H1 (cell line): ENCODE measurements at regions of chr15 and their contacts with region 1.

Region 1: DNA sequence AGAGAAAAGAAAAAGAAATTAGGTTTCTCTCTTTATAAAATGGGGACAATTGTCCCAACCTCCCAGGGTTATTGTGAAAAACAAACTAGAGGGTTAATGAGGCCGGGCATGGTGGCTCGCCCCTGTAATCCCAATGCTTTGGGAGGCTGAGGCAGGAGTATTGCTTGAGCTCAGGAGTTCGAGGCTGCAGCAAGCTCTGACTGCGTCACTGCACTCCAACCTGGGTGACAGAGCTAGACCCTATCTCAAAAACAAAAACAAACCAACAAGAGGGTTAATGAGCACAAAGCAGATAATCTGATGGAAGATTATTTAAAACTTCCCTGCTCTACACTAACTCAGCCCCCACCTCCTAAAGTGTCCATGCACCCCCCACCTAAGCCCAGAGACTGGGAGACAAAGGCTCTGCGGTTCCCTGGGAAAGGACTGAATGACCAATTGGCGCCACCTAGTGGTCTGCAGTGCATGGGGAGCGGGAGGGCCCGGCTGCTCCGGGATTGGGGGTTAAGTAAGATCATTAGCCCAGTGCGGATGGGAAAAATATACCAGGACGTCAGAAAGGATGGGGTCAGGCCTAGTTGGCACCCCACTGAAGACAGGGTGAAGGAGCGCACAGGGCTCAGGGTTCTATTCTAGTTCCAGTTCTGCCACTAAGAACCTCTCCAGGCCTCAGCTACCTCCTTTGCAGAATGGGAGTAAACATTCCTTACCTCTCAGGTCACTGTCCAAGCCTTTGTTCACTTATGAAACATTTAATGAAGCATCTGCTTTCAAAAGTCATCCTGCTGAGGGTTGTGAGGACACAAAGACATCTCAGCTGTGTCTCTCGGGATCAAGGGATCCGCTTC is 15.6 kb downstream of the PIF1 start:
- DNase-seq: peak in 1 of 2 experiments; percentile 97
- H3K4me3 ChIP-seq: peak overlapping the region in 3 of 4 experiments; percentile 26 to 53 (median 26); a peak in 7 of 8 replicates
- H3K27ac ChIP-seq: peak overlapping the region; percentile 95
- H3K4me1 ChIP-seq: peaks cover 28 to 56% (median 44%) of the 10 kb centered on the region in 4 experiments
- H3K27me3 ChIP-seq: no peaks in the 10 kb centered on the region
- CTCF ChIP-seq: peak; percentile 87 to 94 (median 93)
- EP300 ChIP-seq: no peak
- POLR2A ChIP-seq: no peak; a peak in 1 of 3 replicates
- RAD21 ChIP-seq: peak; percentile 87 to 95

Region 2: DNA sequence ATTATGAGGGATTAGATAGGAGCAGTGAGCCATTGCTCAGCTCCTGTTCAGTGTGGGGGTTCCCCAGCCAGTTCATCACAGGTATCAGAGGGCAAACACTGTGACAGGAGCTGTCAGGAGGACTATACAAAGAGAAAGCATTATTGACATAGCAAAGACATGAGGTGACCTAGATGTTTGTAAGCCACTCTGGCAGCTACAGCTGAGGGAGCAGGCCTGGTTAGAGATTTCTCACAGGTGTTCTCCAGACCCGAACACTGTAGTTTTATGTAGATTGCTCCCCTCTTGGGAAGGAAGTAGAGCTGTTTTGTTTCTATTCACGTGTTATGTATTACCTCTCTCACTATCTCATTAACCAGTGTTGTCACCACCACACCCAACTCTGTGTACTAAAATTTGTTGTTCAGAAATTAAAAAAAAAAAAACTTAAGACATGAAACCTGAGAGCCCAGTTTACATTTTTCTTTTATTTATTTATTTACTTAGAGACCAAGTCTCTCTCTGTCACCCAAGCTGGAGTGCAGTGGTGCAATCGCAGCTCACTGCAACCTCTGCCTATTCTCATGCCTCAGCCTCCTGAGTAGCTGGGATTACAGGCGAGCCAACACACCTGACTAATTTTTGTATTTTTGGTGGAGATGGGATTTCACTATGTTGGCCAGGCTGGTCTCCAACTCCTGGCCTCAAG is 158.2 kb before region 1 on chr15:
- CTCF ChIA-PET with region 1: no interaction called
- POLR2A ChIA-PET with region 1: no interaction called
- DNase-seq: peak in 1 of 2 experiments; percentile 10
- H3K4me3 ChIP-seq: no peak overlapping the region
- H3K27ac ChIP-seq: no peak overlapping the region
- H3K4me1 ChIP-seq: peaks cover 3 to 5% (median 3%) of the 10 kb centered on the region in 4 experiments; a peak in 4 of 7 replicates
- H3K27me3 ChIP-seq: no peaks in the 10 kb centered on the region
- CTCF ChIP-seq: no peak
- EP300 ChIP-seq: no peak
- POLR2A ChIP-seq: no peak
- RAD21 ChIP-seq: no peak

Region 3: GRCh38 chr15:64740311-64741170 is 69.3 kb before region 1 on chr15:
- CTCF ChIA-PET with region 1: interaction called, 883 read pairs
- POLR2A ChIA-PET with region 1: interaction called, 157 read pairs
- DNase-seq: no peak
- H3K4me3 ChIP-seq: no peak overlapping the region
- H3K27ac ChIP-seq: no peak overlapping the region
- H3K4me1 ChIP-seq: peaks cover 0 to 2% (median 0%) of the 10 kb centered on the region in 4 experiments; a peak in 2 of 7 replicates
- H3K27me3 ChIP-seq: no peaks in the 10 kb centered on the region
- CTCF ChIP-seq: no peak; a peak in 1 of 4 replicates
- EP300 ChIP-seq: no peak
- POLR2A ChIP-seq: no peak
- RAD21 ChIP-seq: peak in 1 of 2 experiments; percentile 31; a peak in 3 of 4 replicates

Region 4: GRCh38 chr15:64767203-64767602 is 42.7 kb before region 1 on chr15:
- CTCF ChIA-PET with region 1: interaction called, 883 read pairs
- POLR2A ChIA-PET with region 1: interaction called, 46 read pairs
- DNase-seq: no peak
- H3K4me3 ChIP-seq: no peak overlapping the region
- H3K27ac ChIP-seq: peak overlapping the region; percentile 20; the same call in 1 of the 2 replicates
- H3K4me1 ChIP-seq: peaks cover 8 to 33% (median 17%) of the 10 kb centered on the region in 4 experiments
- H3K27me3 ChIP-seq: no peaks in the 10 kb centered on the region
- CTCF ChIP-seq: no peak
- EP300 ChIP-seq: no peak
- POLR2A ChIP-seq: no peak
- RAD21 ChIP-seq: peak; percentile 5 to 18; a peak in 1 of 4 replicates

Region 5: GRCh38 chr15:64825431-64826294 is 15.8 kb after region 1 on chr15 and contains the start of gene PIF1:
- CTCF ChIA-PET with region 1: interaction called, 81 read pairs
- POLR2A ChIA-PET with region 1: interaction called, 381 read pairs
- DNase-seq: peak; percentile 85 to 87
- H3K4me3 ChIP-seq: peak within 1 kb of the TSS; percentile 85 to 93 (median 88)
- H3K27ac ChIP-seq: peak within 1 kb of the TSS; percentile 92
- H3K4me1 ChIP-seq: peaks cover 2 to 9% (median 5%) of the 10 kb centered on the region in 4 experiments; a peak in 6 of 7 replicates
- H3K27me3 ChIP-seq: no peaks in the 10 kb centered on the region
- CTCF ChIP-seq: no peak
- EP300 ChIP-seq: peak in 1 of 2 experiments; percentile 96; a peak in 1 of 3 replicates
- POLR2A ChIP-seq: peak; percentile 84 to 97
- RAD21 ChIP-seq: 0 out of 4 replicates have a peak, but pooled peaks of 1 of the 2 experiments have one; percentile 8
- total RNA-seq, gene PIF1: 136 and 138 TPM in 2 replicates

Region 6: DNA sequence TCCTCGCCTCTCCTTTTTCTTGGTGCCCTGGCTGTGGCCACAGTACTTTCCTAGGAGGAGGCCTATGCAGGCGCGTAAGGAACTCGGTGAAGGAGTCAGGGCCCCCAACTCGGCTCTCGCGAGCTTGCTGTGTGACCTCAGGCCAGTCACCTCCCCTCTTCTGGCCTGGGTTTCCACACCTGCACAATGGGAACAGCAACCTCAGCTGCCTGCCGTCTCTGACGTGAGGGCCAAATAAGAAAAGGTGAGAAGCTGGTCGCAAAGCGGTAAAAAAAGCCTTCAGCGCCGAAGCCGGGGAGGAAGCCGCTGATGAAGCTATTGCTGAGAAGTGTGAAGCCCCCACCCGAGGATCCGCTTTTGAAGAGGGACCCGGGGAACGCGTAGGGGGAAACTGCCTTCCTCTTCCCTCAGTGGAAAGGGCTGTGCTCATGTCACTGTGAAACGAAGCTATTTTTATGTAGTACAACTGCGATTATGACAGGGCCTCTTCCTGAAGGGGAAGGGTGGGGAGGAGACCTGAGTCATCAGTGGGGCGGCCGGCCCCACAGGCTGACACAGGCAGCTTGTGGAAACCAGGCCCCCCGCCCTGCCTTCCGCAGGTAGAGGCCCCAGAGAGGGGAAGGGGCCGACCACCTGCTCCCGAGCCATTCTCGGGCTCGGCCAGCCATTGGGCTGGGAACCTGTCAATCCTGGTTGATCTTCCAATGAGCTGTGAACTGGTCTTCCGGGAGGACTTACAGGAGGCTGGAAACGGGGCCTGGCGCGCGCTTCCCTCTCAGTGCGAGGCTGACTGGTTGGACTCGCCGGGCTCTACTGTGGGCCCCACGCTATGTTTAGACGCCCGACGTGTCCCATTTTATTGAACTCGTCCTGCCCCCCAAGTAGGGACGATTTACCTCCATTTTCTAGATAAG is 83.9 kb after region 1 on chr15:
- CTCF ChIA-PET with region 1: interaction called, 11 read pairs
- POLR2A ChIA-PET with region 1: interaction called, 15 read pairs
- DNase-seq: peak; percentile 96
- H3K4me3 ChIP-seq: peak overlapping the region; percentile 21 to 62 (median 37); a peak in 6 of 8 replicates
- H3K27ac ChIP-seq: no peak overlapping the region; the same call in 1 of the 2 replicates
- H3K4me1 ChIP-seq: peaks cover 7 to 26% (median 14%) of the 10 kb centered on the region in 4 experiments; a peak in 6 of 7 replicates
- H3K27me3 ChIP-seq: no peaks in the 10 kb centered on the region
- CTCF ChIP-seq: no peak
- EP300 ChIP-seq: no peak
- POLR2A ChIP-seq: no peak
- RAD21 ChIP-seq: no peak